Posterior cingulate gyrus (tissue), 11 donors: ENCODE measurements at regions of chr7 and their contacts with region 1.

Region 1: GRCh38 chr7:111855161-111855856 is 293.0 kb upstream of the IMMP2L start:
- DNase-seq: peak in 7 of 10 donors; percentile 31 to 89 (median 46)

Region 2: DNA sequence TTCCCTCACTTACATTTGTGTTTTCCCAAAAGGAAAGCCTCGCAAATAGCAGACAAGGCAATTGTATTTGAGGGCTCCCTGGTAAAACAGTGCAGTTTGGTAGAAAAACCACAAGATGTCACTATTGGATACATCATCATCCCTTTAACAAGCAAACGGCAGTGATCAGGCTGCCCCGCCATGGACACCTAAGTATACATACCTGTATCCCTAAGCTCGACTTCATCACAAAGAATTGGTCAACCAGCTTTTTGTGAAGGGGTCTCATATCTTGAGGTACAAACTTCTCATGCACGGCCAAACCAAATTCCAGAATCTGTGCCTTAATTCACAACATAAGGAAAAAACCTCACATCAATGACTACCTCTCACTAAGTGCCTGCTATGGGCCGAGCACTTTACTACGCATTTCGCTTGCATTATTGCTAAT is 113.5 kb before region 1 on chr7:
- intact Hi-C with region 1: loop called (anchors 5 kb)
- DNase-seq: peak in 8 of 10 donors; percentile 40 to 93 (median 60)

Region 3: DNA sequence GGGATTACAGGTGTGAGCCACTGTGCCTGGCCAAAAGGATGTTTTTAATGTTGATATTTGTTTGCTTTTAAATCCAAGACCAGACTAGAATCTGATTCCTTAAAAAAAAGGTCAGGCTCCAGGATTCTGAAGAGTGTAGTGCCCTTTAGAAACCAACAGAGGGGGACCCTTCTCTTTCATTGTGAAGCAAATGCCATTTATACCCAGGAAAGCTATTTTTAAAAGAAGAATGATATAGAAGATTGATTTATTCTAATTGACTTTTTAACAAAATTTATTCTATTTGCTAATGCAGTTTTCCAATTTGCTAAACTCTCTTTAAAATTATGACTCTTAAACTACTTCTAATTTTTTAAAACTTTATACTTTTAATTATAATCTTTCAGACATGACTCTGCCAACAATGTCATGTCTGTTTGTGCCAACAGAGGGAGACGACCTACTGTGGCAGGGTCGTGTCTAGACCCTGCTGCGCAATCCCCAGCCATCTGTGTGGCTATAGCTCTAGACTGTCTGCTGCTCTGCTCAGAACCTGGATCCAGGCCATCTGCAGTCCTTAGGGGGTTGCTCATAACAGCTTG is 92.0 kb before region 1 on chr7:
- intact Hi-C with region 1: loop called (anchors 5 kb)
- DNase-seq: no peak

Region 4: GRCh38 chr7:111987115-111987826 is 132.0 kb after region 1 on chr7:
- intact Hi-C with region 1: no loop called
- DNase-seq: no peak